ENCODE measurements at regions of chr18 and their contacts with region 1.

Region 1: DNA sequence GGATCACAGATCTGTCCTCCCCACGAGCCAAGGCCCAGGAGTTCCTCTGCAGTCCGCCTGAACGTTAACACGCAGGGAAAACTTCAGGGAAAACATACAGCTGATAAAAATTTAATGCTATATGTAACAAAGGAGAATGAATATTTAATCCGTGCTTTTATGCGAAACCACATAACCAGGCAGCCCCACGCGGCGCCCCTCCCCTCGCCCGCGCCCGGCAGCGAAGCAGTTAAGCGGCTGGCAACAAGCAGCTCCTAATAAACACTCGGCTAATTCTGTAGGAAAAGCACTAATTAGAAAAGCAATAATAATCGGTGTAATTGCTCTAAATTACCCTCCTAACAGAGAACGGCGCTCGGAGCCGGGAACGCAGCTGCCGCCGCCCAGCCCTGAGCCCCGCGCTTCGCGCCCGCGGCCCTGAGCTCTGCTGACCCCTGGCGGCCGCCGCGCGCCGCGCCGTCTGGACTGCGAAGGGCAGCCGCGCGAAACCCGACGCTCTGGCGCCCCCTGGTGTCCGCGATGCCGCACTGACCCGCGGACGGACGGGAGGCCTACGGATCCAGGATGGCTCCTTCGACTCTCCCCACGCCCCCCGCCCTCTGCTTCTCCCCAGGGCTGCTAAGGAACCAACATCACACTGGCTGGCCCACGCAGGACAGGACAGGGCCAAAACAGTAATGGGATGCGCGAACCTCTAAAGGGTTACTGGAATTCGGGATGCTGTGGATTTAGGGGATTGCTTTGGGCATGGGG is 181.4 kb downstream of the SMAD2 start:
- DNase-seq: no peak
- ATAC-seq: peak; percentile 97
- H3K4me3 ChIP-seq: no peak overlapping the region
- H3K27ac ChIP-seq: no peak overlapping the region
- H3K4me1 ChIP-seq: no peaks in the 10 kb centered on the region
- H3K27me3 ChIP-seq: no peaks in the 10 kb centered on the region; a peak in 1 of 4 replicates
- CTCF ChIP-seq: peak; percentile 94 to 99 (median 99); a peak in 5 of 6 replicates
- EP300 ChIP-seq: no peak
- POLR2A ChIP-seq: no peak
- RAD21 ChIP-seq: peak; percentile 98

Region 2: GRCh38 chr18:47397671-47398319 is 351.2 kb before region 1 on chr18:
- CTCF ChIA-PET with region 1: no interaction called
- POLR2A ChIA-PET with region 1: no interaction called
- RAD21 ChIA-PET with region 1: interaction called, 3 read pairs
- SMC1A ChIA-PET with region 1: no interaction called
- in situ Hi-C with region 1: loop called (anchors 5 kb)
- intact Hi-C with region 1: no loop called
- DNase-seq: no peak
- ATAC-seq: 0 out of 3 replicates have a peak, but pooled peaks have one; percentile 44
- H3K4me3 ChIP-seq: no peak overlapping the region
- H3K27ac ChIP-seq: no peak overlapping the region
- H3K4me1 ChIP-seq: no peaks in the 10 kb centered on the region
- H3K27me3 ChIP-seq: no peaks in the 10 kb centered on the region
- CTCF ChIP-seq: peak; percentile 9 to 69 (median 36); a peak in 3 of 6 replicates
- EP300 ChIP-seq: no peak
- POLR2A ChIP-seq: no peak
- RAD21 ChIP-seq: peak; percentile 43; the same call in 1 of the 2 replicates

Region 3: GRCh38 chr18:47595815-47596496 is 153.1 kb before region 1 on chr18:
- CTCF ChIA-PET with region 1: interaction called, 26 read pairs
- POLR2A ChIA-PET with region 1: no interaction called
- RAD21 ChIA-PET with region 1: interaction called, 10 read pairs
- SMC1A ChIA-PET with region 1: interaction called, 32 read pairs
- in situ Hi-C with region 1: loop called (anchors 5 kb)
- intact Hi-C with region 1: loop called (anchors 1 kb)
- DNase-seq: peak; percentile 8
- ATAC-seq: peak; percentile 78
- H3K4me3 ChIP-seq: no peak overlapping the region
- H3K27ac ChIP-seq: no peak overlapping the region
- H3K4me1 ChIP-seq: no peaks in the 10 kb centered on the region
- H3K27me3 ChIP-seq: peaks cover 0 to 6% of the 10 kb centered on the region in 2 experiments; a peak in 2 of 4 replicates
- CTCF ChIP-seq: peak; percentile 67 to 76 (median 68)
- EP300 ChIP-seq: no peak
- POLR2A ChIP-seq: no peak
- RAD21 ChIP-seq: peak; percentile 84